ENCODE measurements at regions of chr9 and their contacts with region 1.

Region 1: DNA sequence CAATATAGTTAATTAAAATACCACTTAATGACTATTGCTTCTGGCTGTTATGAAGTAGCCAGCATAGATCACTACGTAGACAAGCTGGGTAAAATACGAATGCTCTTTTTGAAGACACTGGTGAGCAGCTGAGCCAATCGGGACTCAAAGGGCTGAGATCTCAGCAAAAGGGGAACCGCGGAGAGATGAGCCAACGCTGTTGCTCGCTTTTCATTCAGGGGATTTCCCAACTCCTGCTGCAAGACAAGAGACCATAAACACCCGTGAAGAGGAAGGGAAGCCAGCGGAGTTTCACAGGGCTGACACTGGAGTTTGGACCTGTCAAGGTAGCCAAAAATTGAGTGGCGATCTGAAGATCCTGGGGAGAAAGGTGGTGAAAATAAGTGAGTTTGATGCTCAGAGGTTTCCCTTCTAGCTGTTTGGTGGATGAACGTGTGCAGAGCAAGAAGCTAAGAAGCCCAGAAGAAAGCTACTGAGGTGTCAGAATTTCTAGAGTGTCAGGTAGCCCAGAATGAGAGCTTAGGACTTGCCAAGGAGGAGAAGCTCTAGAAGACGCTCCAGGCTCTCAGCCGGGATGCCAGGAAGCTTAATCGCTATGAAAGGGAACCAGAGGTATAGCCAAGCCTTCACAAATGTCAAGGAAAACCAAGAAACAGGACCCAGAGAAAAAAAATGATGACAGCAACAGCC is 79.6 kb upstream of the RNU6ATAC start:
- DNase-seq: peak; percentile 42
- ATAC-seq: peak; percentile 96
- H3K4me3 ChIP-seq: no peak overlapping the region
- H3K27ac ChIP-seq: no peak overlapping the region
- H3K4me1 ChIP-seq: peaks cover 4% of the 10 kb centered on the region; the same call in 1 of the 2 replicates
- H3K27me3 ChIP-seq: no peaks in the 10 kb centered on the region; a peak in 2 of 4 replicates
- CTCF ChIP-seq: no peak
- EP300 ChIP-seq: no peak
- POLR2A ChIP-seq: no peak
- RAD21 ChIP-seq: no peak

Region 2: DNA sequence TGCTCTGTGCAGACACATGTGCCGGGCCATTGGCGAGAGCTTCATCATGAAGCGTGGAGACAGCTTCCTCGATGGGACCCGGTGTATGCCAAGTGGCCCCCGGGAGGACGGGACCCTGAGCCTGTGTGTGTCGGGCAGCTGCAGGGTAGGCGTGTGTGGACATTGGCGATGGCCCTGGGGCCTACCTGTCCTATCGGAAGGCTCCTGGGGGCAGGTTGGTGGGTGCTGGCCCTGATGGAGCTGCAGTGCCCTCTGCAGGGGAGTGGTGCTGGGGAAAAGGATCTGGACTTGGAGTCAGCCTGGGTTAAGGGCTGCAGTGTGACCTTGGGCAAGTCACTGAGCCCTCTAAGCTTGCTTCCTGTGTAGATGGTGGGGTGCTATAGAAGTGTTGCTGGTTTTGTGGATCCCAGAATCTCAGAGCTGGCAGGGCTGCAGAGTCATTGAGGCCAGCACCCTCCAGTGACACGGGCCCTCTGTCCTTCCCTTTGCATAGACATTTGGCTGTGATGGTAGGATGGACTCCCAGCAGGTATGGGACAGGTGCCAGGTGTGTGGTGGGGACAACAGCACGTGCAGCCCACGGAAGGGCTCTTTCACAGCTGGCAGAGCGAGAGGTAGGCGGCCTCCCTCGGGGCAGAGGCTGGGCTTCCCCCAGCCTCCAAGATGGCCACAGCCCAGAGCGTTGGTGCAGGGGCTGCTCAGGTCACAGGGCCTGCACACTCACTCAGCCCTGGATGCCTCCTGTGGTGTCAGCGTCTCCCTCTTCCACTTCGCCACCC is 806.0 kb before region 1 on chr9:
- CTCF ChIA-PET with region 1: no interaction called
- POLR2A ChIA-PET with region 1: no interaction called
- RAD21 ChIA-PET with region 1: no interaction called
- SMC1A ChIA-PET with region 1: no interaction called
- in situ Hi-C with region 1: no loop called
- intact Hi-C with region 1: no loop called
- DNase-seq: no peak
- ATAC-seq: peak; percentile 94
- H3K4me3 ChIP-seq: no peak overlapping the region
- H3K27ac ChIP-seq: no peak overlapping the region
- H3K4me1 ChIP-seq: peaks cover 4% of the 10 kb centered on the region; the same call in 1 of the 2 replicates
- H3K27me3 ChIP-seq: no peaks in the 10 kb centered on the region
- CTCF ChIP-seq: peak; percentile 57 to 82 (median 71)
- EP300 ChIP-seq: no peak
- POLR2A ChIP-seq: no peak
- RAD21 ChIP-seq: peak; percentile 72

Region 3: DNA sequence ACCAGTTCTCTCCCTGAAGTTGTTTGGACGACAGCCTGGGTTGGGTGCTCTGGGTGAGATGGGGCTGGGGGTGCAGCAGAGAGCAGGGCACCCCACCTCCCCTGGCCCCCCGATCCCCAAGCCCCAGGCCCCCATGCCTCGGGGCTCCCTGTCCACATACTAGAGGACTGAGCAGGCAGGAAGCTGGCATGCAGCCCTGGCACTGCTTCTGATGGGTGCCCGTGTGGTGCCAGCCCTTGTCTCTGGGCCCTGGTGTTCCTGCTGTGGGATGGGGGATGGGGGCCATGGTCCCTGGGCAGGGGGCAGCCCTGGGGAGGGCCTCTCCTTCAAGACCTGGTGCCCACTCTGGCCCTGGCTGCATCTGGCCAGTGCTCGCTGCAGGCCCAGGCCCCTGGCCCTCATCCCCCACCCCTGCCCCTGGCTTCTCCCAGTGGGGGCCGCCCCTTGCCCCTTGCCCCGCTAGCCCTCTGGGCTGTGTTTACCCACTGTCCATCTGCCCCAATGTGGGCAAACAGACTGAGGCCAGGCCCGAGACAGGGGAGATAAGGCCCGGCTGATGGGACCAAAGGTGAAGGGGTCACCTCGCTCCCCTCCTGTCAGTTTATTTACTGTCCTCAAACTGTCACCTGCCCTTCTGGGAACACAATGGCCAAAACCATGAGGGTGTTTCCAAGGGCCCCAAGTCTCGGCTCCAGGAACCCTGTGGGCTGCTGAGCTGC is 15.1 kb after region 1 on chr9:
- CTCF ChIA-PET with region 1: no interaction called
- POLR2A ChIA-PET with region 1: no interaction called
- RAD21 ChIA-PET with region 1: no interaction called
- SMC1A ChIA-PET with region 1: no interaction called
- in situ Hi-C with region 1: no loop called
- intact Hi-C with region 1: no loop called
- DNase-seq: no peak
- ATAC-seq: no peak
- H3K4me3 ChIP-seq: no peak overlapping the region
- H3K27ac ChIP-seq: no peak overlapping the region
- H3K4me1 ChIP-seq: no peaks in the 10 kb centered on the region
- H3K27me3 ChIP-seq: no peaks in the 10 kb centered on the region; a peak in 1 of 4 replicates
- CTCF ChIP-seq: no peak
- EP300 ChIP-seq: no peak
- POLR2A ChIP-seq: no peak
- RAD21 ChIP-seq: no peak

Region 4: DNA sequence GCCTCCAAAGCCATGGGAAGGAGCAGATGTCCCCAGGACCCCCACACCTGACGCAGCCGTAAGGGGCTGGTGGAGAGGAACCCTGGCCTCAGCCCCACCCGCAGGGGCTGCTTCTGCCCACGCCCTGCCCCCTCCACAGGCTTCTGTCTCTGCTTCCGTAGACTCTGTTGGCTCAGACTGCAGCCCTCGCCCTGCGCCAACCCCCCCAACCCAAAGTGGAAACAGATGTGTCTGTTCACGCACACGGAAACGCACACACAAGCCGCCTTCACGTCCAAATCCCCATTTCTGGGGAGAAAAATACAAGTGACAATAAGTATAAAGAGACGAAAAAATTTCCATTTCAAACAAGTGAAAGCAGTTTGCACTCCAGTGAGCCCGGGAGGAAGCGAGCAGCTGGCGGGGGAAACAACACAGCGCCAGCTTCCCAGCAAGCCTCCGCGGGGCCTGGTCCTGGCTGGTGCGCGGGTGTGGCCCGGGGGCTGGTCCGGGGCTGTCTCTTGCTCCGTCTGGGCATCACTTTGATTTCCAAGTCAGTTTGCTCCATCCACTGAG is 49.8 kb after region 1 on chr9:
- CTCF ChIA-PET with region 1: no interaction called
- POLR2A ChIA-PET with region 1: no interaction called
- RAD21 ChIA-PET with region 1: no interaction called
- SMC1A ChIA-PET with region 1: no interaction called
- in situ Hi-C with region 1: no loop called
- intact Hi-C with region 1: loop called (anchors 2 kb)
- DNase-seq: no peak
- ATAC-seq: no peak
- H3K4me3 ChIP-seq: no peak overlapping the region
- H3K27ac ChIP-seq: no peak overlapping the region
- H3K4me1 ChIP-seq: no peaks in the 10 kb centered on the region
- H3K27me3 ChIP-seq: no peaks in the 10 kb centered on the region; a peak in 1 of 4 replicates
- CTCF ChIP-seq: no peak
- EP300 ChIP-seq: no peak
- POLR2A ChIP-seq: no peak
- RAD21 ChIP-seq: no peak